ENCODE measurements at regions of chr1 and their contacts with region 1.

Region 1: GRCh38 chr1:110829955-110830553 is 42.9 kb upstream of the CD53 start:
- DNase-seq: peak; percentile 37
- ATAC-seq: peak; percentile 92
- H3K4me3 ChIP-seq: no peak overlapping the region
- H3K27ac ChIP-seq: no peak overlapping the region
- H3K4me1 ChIP-seq: no peaks in the 10 kb centered on the region
- H3K27me3 ChIP-seq: no peaks in the 10 kb centered on the region
- CTCF ChIP-seq: peak; percentile 65 to 89 (median 88)
- EP300 ChIP-seq: no peak
- POLR2A ChIP-seq: no peak
- RAD21 ChIP-seq: peak; percentile 80

Region 2: GRCh38 chr1:110787328-110788071 is 42.6 kb before region 1 on chr1:
- CTCF ChIA-PET with region 1: interaction called, 26 read pairs
- POLR2A ChIA-PET with region 1: interaction called, 3 read pairs
- RAD21 ChIA-PET with region 1: interaction called, 4 read pairs
- SMC1A ChIA-PET with region 1: interaction called, 6 read pairs
- in situ Hi-C with region 1: no loop called
- intact Hi-C with region 1: loop called (anchors 1 kb)
- DNase-seq: peak; percentile 76
- ATAC-seq: peak; percentile 83
- H3K4me3 ChIP-seq: no peak overlapping the region
- H3K27ac ChIP-seq: peak overlapping the region; percentile 98
- H3K4me1 ChIP-seq: peaks cover 29% of the 10 kb centered on the region
- H3K27me3 ChIP-seq: no peaks in the 10 kb centered on the region
- CTCF ChIP-seq: no peak
- EP300 ChIP-seq: no peak
- POLR2A ChIP-seq: no peak
- RAD21 ChIP-seq: no peak

Region 3: GRCh38 chr1:110850636-110851035 is 20.6 kb after region 1 on chr1:
- CTCF ChIA-PET with region 1: interaction called, 16 read pairs
- POLR2A ChIA-PET with region 1: no interaction called
- RAD21 ChIA-PET with region 1: no interaction called
- SMC1A ChIA-PET with region 1: no interaction called
- in situ Hi-C with region 1: no loop called
- intact Hi-C with region 1: no loop called
- DNase-seq: no peak
- ATAC-seq: no peak
- H3K4me3 ChIP-seq: no peak overlapping the region
- H3K27ac ChIP-seq: no peak overlapping the region
- H3K4me1 ChIP-seq: no peaks in the 10 kb centered on the region
- H3K27me3 ChIP-seq: no peaks in the 10 kb centered on the region
- CTCF ChIP-seq: no peak
- EP300 ChIP-seq: no peak
- POLR2A ChIP-seq: no peak
- RAD21 ChIP-seq: no peak

Measured in GM12878 (cell line).